ENCODE measurements at regions of chr1 and their contacts with region 1.

Region 1: GRCh38 chr1:22025368-22026155 is 24.1 kb downstream of the CELA3A start:
- DNase-seq: peak; percentile 79
- CTCF ChIP-seq: no peak

Region 2: DNA sequence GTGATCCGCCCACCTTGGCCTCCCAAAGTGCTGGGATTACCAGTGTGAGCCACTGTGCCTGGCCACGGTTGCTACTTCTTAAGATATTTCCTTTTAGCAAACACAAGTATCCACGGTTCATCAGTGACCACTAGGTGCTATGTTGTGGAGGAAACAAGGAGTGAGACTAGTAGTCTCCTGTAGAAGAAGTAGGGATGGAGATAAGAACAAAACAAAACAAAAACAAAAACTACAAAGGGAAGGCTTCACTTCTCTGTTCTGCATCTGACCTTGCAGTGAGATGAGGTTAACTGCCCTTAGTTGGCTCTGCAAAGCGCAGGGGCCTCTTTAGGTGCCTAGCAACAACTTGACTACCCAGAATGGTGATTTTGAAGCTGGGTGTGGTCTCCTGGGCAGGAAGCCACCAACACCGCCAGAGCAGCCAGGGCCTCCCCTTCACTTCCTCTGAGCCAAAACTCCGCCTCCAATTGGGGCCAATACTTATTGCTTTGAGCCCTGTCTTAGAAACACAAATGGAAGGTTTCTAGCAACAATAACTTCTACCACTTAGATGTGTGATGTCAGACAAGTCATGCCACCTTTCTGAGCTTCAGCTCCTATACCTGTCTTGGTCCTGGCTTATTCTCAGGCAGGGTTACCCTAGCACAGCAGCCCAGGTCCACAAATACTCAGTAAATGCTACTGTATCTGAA is 14.2 kb after region 1 on chr1:
- CTCF ChIA-PET with region 1: interaction called, 31 read pairs
- POLR2A ChIA-PET with region 1: interaction called, 9 read pairs
- DNase-seq: peak; percentile 85
- CTCF ChIP-seq: no peak

Region 3: DNA sequence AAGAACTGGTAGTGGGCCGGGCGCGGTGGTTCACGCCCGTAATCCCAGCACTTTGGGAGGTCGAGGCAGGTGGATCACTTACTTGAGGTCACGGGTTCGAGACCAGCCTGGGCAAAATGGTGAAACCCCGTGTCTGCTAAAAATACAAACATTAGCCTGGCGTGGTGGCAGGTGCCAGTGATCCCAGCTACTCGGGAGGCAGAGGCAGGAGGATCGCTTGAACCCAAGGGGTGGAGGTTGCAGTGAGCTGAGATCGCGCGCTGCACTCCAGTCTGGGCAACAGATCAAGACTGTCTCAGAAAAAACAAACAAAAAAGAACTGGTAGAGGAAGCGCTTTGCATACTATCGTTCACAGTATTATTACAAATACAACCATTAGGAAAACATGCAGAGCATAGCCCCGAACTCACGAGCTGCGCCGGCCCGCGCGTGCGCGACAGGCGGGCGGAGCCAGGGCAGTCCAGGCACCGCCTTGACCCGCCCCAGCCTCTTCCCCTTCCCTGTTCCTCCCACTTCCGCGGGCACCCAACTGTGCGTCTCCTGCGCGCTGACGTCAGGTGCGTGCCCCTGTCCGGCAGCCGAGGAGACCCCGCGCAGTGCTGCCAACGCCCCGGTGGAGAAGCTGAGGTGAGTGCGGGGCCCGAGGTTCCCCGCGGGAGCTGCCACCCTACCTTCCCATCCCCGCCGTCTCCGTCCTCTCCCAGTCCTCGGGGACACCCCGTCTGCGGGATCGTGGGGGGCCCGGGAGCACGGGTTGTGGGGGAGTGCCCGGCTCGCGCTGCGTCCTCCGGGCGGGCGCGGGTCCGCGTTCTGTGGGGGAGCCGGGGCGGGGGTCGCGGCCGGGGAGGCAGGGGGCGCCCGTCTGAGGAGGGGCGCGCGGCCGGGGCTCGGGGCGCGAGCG is 26.8 kb after region 1 on chr1 and contains the start of gene CDC42:
- CTCF ChIA-PET with region 1: interaction called, 9 read pairs
- POLR2A ChIA-PET with region 1: interaction called, 28 read pairs
- DNase-seq: peak; percentile 96
- CTCF ChIP-seq: no peak

Region 4: GRCh38 chr1:22296701-22297591 is 271.4 kb after region 1 on chr1:
- CTCF ChIA-PET with region 1: no interaction called
- POLR2A ChIA-PET with region 1: no interaction called
- DNase-seq: no peak
- CTCF ChIP-seq: no peak